ENCODE measurements at regions of chr7 and their contacts with region 1.

Region 1: DNA sequence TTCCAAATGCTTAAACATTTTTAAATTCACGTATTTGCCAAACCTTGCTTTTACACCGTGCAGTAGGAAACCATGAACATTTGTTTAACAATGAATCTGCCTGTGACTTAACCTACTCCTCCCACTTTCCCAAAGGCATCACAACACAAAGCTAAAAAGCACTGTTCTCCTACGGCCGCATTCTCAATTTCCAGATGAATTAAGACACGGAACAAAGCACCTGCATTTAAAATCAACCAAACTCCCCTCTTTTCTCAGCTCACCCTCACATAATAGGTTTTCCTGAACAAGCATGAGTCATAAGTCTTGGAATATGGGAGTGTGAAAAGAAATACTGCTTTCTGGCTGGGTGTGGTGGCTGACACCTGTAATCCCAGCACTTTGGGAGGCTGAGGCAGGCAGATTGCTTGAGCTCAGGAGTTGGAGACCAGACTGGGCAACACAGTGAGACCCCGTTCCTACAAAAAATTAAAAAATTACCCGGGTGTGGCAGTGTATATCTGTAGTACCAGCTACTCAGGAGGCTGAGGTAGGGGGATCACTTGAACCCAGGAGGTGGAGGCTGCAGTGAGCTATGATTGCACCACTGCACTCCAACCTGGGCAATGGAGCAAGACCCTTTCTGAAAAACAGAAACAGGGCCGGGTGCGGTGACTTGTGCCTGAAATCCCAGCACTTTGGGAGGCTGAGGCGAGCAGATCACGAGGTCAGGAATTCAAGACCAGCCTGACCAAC is 51.7 kb upstream of the CYTH3 start:
- DNase-seq: no peak
- H3K4me3 ChIP-seq: no peak overlapping the region
- H3K27ac ChIP-seq: no peak overlapping the region
- H3K4me1 ChIP-seq: no peaks in the 10 kb centered on the region; the same call in 1 of the 2 replicates
- H3K27me3 ChIP-seq: no peaks in the 10 kb centered on the region

Region 2: DNA sequence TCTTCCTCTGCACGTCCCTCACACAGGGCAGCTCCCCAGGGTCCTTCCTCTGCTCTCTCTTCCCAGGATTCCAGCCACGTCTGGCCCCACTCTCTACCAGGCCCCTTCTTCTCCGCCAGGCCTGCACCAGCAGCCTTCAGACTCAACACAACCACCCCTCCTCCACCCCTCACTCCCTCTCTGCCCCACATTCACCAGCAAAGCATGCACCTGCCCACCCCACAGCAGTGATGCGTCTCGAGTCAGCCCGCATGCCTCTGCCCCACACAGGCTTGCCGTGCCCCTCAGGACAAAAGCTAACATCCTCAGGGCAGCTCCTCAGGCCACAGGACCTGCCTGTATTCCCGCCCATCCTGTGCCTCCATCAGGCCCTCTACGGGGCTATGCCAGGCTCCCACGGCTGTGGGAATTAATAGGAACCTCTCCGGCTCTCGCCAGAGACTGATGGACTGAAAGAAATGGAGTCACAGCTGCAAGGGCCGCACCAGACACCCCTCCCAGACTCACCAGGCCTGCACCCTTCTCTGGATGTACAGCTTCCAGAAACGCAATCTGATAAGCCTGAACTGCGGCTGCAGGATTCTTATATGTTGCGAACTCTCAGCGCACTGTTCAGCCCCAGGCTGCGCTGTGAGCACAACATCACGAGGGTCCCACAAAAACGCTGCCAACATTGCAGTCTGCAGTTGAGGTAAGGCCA is 151.8 kb before region 1 on chr7:
- in situ Hi-C with region 1: loop called (anchors 5 kb)
- DNase-seq: peak; percentile 64
- H3K4me3 ChIP-seq: no peak overlapping the region
- H3K27ac ChIP-seq: no peak overlapping the region
- H3K4me1 ChIP-seq: peaks cover 14% of the 10 kb centered on the region
- H3K27me3 ChIP-seq: no peaks in the 10 kb centered on the region